ENCODE measurements at regions of chr3 and their contacts with region 1.

Region 1: GRCh38 chr3:142279965-142280590 is 54.7 kb upstream of the GK5 start:
- DNase-seq: no peak
- H3K4me3 ChIP-seq: no peak overlapping the region
- H3K27ac ChIP-seq: no peak overlapping the region
- H3K4me1 ChIP-seq: peaks cover 0 to 8% (median 6%) of the 10 kb centered on the region in 4 donors
- H3K27me3 ChIP-seq: no peaks in the 10 kb centered on the region
- CTCF ChIP-seq: peak; percentile 55 to 74 (median 66)
- EP300 ChIP-seq: no peak
- POLR2A ChIP-seq: no peak

Region 2: DNA sequence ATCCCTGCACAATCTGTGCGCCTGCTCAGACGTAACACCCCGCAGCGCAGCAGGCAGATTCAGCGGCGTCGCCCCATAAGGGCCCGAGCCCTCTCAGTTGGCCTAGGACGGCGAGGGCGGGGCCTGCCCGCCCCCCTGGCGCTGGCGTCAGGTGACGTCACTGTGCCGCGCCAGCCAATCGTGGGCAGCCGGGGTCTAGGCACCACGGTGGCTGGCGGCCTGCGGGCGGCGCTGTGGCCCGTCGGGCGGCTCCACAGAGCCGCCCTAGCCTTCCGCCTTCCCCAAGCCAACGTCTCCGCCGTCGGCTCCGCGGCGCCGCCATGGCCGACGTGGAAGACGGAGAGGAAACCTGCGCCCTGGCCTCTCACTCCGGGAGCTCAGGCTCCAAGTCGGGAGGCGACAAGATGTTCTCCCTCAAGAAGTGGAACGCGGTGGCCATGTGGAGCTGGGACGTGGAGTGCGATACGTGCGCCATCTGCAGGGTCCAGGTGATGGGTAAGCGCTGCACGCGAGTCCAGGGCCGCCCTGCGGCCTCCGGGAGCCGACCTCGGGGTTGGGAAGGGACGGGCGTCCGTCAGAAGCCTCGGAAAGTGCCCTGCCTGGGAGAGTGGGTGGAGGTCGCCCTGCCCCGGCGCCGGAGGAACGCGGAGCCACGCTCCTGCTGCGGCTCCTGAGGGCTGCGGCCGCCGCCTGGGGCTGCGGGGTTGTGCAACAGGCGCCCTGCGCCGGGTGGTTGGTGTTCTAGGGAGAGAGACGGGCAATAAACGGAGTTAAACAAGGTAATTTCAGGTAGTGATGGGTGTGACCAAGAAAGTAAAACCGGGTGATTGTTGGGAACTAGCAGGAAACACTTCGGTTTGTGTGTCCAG is 541.8 kb before region 1 on chr3 and contains the start of gene RNF7:
- intact Hi-C with region 1: loop called (anchors 5 kb)
- DNase-seq: peak; percentile 98
- H3K4me3 ChIP-seq: peak within 1 kb of the TSS; percentile 77 to 89 (median 84)
- H3K27ac ChIP-seq: peak within 1 kb of the TSS; percentile 94 to 96 (median 96)
- H3K4me1 ChIP-seq: peaks cover 30 to 40% (median 35%) of the 10 kb centered on the region in 4 donors
- H3K27me3 ChIP-seq: no peaks in the 10 kb centered on the region
- CTCF ChIP-seq: peak; percentile 90 to 95 (median 94)
- EP300 ChIP-seq: no peak
- POLR2A ChIP-seq: peak; percentile 2
- total RNA-seq, gene RNF7: 47.2 to 107 (median 80.2) TPM

Region 3: GRCh38 chr3:141959921-141960554 is 320.0 kb before region 1 on chr3:
- intact Hi-C with region 1: loop called (anchors 5 kb)
- DNase-seq: no peak
- H3K4me3 ChIP-seq: no peak overlapping the region
- H3K27ac ChIP-seq: peak overlapping the region; percentile 35 to 74 (median 66)
- H3K4me1 ChIP-seq: peaks cover 0 to 27% (median 23%) of the 10 kb centered on the region in 4 donors
- H3K27me3 ChIP-seq: no peaks in the 10 kb centered on the region
- CTCF ChIP-seq: no peak
- EP300 ChIP-seq: no peak
- POLR2A ChIP-seq: no peak

Region 4: DNA sequence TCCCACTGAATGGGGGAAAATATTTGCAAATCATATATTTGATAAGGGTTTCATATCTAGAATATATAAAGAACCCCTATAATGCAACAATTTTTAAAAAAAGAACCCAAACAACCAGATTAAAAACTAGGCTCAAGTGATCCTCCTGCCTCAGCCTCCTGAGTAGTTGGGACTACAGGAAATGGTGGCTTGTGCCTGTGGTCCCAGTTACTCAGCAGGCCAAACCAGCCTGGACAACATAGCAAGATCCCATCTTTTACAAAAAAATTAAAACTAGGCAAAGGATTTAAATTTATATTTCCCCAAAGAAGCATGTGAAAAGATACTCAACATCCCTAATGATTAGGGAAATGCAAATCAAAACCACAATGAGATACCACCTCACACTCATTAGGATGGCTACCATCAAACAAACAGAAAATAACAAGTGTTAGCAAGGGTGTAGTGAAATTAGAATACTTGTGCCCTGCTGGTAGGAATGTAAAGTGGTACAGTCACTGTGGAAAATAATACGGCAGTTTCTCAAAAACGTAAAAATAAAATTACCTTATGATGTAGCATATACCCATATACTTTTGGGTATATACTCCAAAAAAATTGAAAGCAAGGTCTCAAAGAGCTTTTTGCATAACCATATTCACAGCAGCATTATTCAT is 150.4 kb before region 1 on chr3:
- intact Hi-C with region 1: loop called (anchors 2 kb)
- DNase-seq: no peak
- H3K4me3 ChIP-seq: no peak overlapping the region
- H3K27ac ChIP-seq: no peak overlapping the region
- H3K4me1 ChIP-seq: peaks cover 0 to 3% (median 0%) of the 10 kb centered on the region in 4 donors
- H3K27me3 ChIP-seq: no peaks in the 10 kb centered on the region
- CTCF ChIP-seq: peak in 1 of 3 experiments; percentile 20
- EP300 ChIP-seq: no peak
- POLR2A ChIP-seq: no peak

Region 5: DNA sequence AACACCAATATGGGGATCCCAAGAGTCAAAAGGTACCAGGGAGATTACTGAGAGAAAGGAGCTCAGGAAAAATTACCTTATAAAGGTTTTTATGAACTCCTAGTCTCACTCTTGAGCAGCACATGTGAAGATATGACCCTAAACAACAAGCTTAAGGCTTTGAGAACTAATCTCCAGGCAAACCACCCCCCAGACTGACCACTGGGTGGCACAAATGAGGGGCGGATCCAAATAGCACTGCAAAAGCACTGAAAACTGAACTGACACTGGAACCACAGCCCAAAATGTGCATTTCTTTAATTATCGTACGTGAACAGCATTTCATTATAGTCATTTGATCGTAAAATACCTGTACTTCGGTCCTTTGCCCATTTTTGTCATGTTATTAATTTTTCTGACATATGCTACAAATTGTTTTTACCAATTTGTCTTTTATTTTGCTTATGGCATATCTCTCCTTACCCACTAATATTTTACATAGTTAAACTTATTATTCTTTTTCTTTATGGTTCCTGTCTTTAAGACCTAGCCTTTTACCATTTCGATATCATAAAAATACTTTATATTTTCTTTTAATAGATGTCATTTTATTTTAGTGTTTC is 99.2 kb before region 1 on chr3:
- intact Hi-C with region 1: loop called (anchors 2 kb)
- DNase-seq: no peak
- H3K4me3 ChIP-seq: no peak overlapping the region
- H3K27ac ChIP-seq: no peak overlapping the region
- H3K4me1 ChIP-seq: no peaks in the 10 kb centered on the region
- H3K27me3 ChIP-seq: no peaks in the 10 kb centered on the region
- CTCF ChIP-seq: peak; percentile 48 to 58 (median 57)
- EP300 ChIP-seq: no peak
- POLR2A ChIP-seq: no peak

Region 6: DNA sequence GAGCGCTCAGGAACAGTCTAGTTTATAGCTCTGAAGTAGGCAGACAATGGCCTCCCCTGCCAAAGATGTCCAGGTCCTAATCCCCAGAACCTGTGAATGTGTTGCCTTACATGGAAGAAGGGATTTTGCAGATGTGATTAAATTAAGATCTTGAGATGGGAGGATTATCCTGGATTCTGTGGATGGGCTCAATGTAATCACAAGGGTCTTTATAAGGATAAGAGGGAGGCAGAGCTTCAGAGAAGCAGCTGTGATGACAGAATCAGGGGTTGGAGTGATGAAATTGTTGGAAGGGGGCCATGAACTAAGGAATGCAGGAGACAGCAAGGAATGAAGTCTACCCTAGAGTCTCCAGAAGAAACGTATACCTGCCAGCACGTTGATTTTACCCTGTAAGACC is 40.7 kb before region 1 on chr3:
- intact Hi-C with region 1: no loop called
- DNase-seq: no peak
- H3K4me3 ChIP-seq: no peak overlapping the region
- H3K27ac ChIP-seq: no peak overlapping the region
- H3K4me1 ChIP-seq: no peaks in the 10 kb centered on the region
- H3K27me3 ChIP-seq: no peaks in the 10 kb centered on the region
- CTCF ChIP-seq: no peak
- EP300 ChIP-seq: no peak
- POLR2A ChIP-seq: no peak